WTC11 (cell line): ENCODE measurements at regions of chr15 and their contacts with region 1.

Region 1: GRCh38 chr15:92647467-92648163 is 8.0 kb downstream of the FAM174B start:
- DNase-seq: no peak
- ATAC-seq: peak; percentile 84
- H3K4me3 Mint-ChIP-seq: no peak overlapping the region; the same call in 1 of the 2 replicates
- H3K27ac Mint-ChIP-seq: peak overlapping the region; percentile 99
- H3K4me1 Mint-ChIP-seq: peaks cover 81% of the 10 kb centered on the region
- H3K27me3 Mint-ChIP-seq: no peaks in the 10 kb centered on the region
- CTCF ChIP-seq: no peak

Region 2: GRCh38 chr15:92391640-92392039 is 256.0 kb before region 1 on chr15:
- CTCF ChIA-PET with region 1: no interaction called
- POLR2A ChIA-PET with region 1: interaction called, 12 read pairs
- DNase-seq: peak; percentile 59
- ATAC-seq: peak; percentile 33
- H3K4me3 Mint-ChIP-seq: peak overlapping the region; percentile 80
- H3K27ac Mint-ChIP-seq: no peak overlapping the region
- H3K4me1 Mint-ChIP-seq: peaks cover 27% of the 10 kb centered on the region
- H3K27me3 Mint-ChIP-seq: peaks cover 67% of the 10 kb centered on the region
- CTCF ChIP-seq: 0 out of 2 replicates have a peak, but pooled peaks have one; percentile 26

Region 3: DNA sequence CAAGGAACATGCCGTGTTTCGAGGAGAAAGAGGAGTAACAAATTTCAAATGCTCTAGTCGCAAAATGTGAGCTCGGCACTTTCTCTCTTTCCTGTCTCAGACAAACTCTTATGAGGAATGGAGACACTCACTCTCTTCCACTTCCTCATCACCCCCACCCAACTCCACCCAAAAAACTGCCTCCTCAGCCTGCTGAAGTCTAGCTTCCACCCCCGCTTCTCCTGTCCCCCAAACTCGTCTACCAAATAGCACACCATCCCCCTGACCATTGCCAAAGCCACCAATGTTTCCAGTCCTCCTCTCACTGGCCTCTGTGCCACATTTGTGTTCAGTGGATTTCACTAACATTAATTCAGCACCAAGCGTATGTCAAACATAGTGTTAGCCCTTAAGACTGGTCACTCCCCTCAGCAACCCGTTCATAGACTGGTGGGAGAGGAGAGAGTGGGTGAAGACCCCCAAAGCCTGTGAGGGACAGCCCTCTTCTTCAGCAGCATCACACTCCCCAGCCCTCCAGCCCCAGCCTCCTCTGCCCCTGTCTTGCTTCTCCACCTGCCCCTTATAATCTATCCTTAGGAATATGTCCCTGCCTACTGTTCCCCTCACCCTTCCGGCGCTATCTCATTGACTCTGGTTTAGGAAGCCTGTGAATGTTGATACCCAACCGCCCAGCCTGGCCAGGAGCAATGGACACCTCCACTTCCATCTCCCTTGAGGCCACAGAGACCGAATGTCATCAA is 69.3 kb before region 1 on chr15:
- CTCF ChIA-PET with region 1: no interaction called
- POLR2A ChIA-PET with region 1: no interaction called
- DNase-seq: no peak
- ATAC-seq: no peak
- H3K4me3 Mint-ChIP-seq: no peak overlapping the region
- H3K27ac Mint-ChIP-seq: no peak overlapping the region
- H3K4me1 Mint-ChIP-seq: no peaks in the 10 kb centered on the region
- H3K27me3 Mint-ChIP-seq: peaks cover 2% of the 10 kb centered on the region; the same call in 1 of the 2 replicates
- CTCF ChIP-seq: no peak

Region 4: DNA sequence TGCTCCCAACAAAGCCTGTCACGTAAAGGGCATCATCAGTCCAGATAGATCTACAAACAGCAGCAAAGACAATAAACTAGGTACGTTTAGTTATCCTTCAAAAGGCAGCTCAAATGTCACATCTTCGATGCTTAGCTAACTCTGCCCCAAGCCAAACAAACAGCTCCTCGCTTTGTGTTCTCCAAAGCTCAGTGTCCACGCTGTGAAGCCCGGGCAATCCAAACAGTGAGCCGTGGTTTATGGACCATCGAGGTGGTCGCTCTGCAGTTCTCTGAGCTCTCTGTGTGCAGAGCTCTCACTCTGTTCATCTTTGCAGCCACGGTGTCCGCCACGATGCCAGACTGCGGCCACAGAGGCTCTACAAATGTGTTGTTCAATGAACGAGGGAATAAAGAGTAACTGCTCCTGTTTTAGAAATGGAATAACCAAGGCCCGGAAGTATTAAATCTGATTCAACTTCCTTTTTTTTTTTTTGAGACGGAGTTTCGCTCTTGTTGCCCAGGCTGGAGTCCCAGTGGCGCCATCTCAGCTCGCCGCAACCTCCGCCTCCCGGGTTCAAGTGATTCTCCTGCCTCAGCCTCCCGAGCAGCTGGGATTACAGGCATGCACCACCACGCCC is 125.1 kb after region 1 on chr15:
- CTCF ChIA-PET with region 1: no interaction called
- POLR2A ChIA-PET with region 1: no interaction called
- DNase-seq: no peak
- ATAC-seq: no peak
- H3K4me3 Mint-ChIP-seq: no peak overlapping the region
- H3K27ac Mint-ChIP-seq: no peak overlapping the region
- H3K4me1 Mint-ChIP-seq: no peaks in the 10 kb centered on the region
- H3K27me3 Mint-ChIP-seq: no peaks in the 10 kb centered on the region
- CTCF ChIP-seq: no peak